ENCODE measurements at regions of chr1 and their contacts with region 1.

Region 1: DNA sequence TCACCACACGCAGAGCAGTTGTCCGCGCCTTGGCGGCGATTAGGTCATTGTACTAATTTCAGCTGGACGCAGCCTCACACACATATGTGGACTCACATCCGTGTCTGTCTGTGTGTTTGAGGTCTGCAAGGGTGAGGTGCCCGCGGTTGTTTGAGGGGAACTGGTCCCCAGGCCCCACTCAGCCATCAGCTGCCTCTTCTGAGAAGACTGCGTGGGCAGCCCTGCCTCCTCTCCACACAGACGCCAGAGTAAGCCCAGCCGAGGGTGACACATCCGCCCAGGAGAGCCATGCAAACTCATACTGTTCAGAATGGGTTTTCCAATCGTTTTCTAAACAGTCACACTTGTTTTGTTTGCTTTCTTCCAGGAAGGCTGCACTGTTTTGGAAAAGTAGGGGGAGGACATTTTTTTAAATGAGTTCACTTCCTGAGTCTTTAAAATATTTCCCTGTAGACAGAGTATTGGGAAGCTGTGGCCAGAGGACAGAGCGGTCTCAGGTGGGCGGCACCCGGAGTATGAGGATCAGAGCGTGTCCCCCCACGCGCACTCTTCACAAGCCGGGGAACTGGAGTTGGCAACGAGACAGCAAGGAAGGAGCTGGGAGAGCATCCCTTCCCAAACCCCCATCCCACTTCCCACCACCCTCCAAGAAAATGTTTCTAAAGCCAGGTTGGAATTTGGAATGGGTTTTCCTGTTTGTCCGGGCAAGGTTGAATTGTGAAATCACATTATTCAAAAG is 53.3 kb downstream of the TOMM20 start:
- DNase-seq: peak; percentile 88
- ATAC-seq: peak; percentile 66
- H3K4me3 ChIP-seq: peak overlapping the region; percentile 7
- H3K27ac ChIP-seq: peak overlapping the region; percentile 91
- H3K4me1 ChIP-seq: peaks cover 62% of the 10 kb centered on the region
- H3K27me3 ChIP-seq: no peaks in the 10 kb centered on the region
- CTCF ChIP-seq: no peak

Region 2: GRCh38 chr1:234589854-234590620 is 485.3 kb before region 1 on chr1:
- intact Hi-C with region 1: loop called (anchors 5 kb)
- DNase-seq: no peak
- ATAC-seq: no peak
- H3K4me3 ChIP-seq: no peak overlapping the region
- H3K27ac ChIP-seq: no peak overlapping the region
- H3K4me1 ChIP-seq: peaks cover 6% of the 10 kb centered on the region
- H3K27me3 ChIP-seq: no peaks in the 10 kb centered on the region
- CTCF ChIP-seq: no peak

Region 3: DNA sequence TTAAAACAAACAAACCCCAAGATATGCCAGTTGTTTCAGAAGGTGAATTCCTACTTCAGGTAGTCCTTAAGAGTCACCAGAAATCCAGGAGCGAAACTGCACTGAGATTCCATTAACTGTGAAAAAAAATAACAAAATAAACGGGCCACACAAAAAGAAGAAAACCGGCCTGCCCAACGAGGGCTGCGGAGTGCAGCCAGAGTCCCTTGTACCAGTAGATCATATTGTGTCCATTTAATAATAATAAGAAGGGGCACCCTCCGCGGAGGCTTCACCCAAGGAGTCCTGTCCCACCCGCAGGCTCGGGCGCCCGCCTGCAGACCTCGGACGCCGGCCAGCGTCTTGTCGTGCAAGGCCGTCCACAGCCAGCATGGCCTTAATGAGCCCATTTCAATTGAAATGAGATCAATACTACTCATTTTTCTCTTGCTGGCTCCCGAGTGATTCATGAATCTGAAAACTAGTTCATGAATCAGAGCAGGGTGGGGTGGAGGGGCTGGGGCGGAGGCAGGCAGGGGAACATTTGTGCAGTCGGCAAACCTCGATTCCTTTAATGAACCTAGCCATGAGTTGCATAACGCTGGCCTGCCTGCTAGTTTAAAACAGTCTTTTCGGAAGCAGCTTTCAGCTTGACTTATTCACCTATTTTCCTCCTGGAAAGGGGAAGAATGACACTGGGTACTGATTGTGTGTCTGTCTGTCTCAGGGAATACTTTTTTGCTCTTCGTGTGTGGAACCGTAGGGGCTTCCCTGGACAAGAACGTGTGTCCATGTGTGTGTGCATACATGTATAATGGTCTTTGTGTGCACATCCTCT is 352.2 kb before region 1 on chr1:
- intact Hi-C with region 1: loop called (anchors 10 kb)
- DNase-seq: peak; percentile 81
- ATAC-seq: peak; percentile 34
- H3K4me3 ChIP-seq: peak overlapping the region; percentile 30
- H3K27ac ChIP-seq: peak overlapping the region; percentile 99
- H3K4me1 ChIP-seq: peaks cover 94% of the 10 kb centered on the region
- H3K27me3 ChIP-seq: no peaks in the 10 kb centered on the region
- CTCF ChIP-seq: no peak

Region 4: GRCh38 chr1:234862944-234863515 is 212.3 kb before region 1 on chr1:
- intact Hi-C with region 1: loop called (anchors 10 kb)
- DNase-seq: no peak
- ATAC-seq: peak; percentile 62
- H3K4me3 ChIP-seq: no peak overlapping the region
- H3K27ac ChIP-seq: peak overlapping the region; percentile 79
- H3K4me1 ChIP-seq: peaks cover 29% of the 10 kb centered on the region
- H3K27me3 ChIP-seq: no peaks in the 10 kb centered on the region
- CTCF ChIP-seq: no peak